ENCODE measurements at regions of chr7 and their contacts with region 1.

Region 1: DNA sequence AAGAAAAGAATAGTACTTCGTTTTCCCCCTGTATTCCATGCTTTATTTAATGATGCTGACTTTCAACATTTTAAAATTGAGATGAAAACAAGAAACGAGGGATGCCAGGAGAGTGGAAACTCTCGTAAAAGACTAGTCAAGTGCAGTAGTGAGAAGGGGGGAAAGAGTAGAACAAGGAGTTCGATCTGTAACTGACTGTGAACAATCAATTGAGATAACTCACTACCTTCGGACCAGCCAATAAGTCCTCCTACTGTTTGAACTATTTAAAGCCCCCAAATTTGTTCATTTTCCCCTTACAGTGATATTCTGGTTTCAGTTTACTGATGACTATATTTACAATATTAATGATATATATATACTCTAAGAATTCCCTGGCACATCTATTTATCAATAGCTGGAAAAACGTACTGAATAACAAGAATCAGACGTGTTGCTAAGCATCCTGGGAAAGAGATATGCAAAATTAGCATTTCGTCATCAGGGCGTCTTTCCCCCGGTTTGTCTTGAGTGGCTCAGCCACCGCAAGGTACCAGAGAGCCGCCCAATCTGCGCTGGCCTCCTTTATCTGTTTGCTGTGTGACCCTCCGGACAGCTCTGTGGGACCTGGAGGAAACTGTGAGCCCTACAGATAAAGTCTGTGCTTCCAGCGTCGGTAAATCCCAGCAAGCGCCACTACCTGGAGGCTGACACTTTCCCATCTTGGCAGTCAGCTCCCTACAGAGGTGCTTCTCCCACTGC is 41.1 kb downstream of the PDIA4 start:
- DNase-seq: peak; percentile 86 to 93 (median 90)
- H3K4me3 ChIP-seq: peak overlapping the region; percentile 66 to 99 (median 81)
- H3K4me3 Mint-ChIP-seq: peak overlapping the region; percentile 98
- H3K27ac ChIP-seq: peak overlapping the region; percentile 62 to 78
- H3K27ac Mint-ChIP-seq: peak overlapping the region; percentile 85 to 95 (median 91)
- H3K4me1 ChIP-seq: peaks cover 40 to 48% of the 10 kb centered on the region in 2 donors
- H3K4me1 Mint-ChIP-seq: peaks cover 45% of the 10 kb centered on the region
- H3K27me3 ChIP-seq: peaks cover 0 to 3% of the 10 kb centered on the region in 2 donors
- H3K27me3 Mint-ChIP-seq: peaks cover under 1 to 9% (median 2%) of the 10 kb centered on the region in 3 donors
- CTCF ChIP-seq: no peak

Region 2: DNA sequence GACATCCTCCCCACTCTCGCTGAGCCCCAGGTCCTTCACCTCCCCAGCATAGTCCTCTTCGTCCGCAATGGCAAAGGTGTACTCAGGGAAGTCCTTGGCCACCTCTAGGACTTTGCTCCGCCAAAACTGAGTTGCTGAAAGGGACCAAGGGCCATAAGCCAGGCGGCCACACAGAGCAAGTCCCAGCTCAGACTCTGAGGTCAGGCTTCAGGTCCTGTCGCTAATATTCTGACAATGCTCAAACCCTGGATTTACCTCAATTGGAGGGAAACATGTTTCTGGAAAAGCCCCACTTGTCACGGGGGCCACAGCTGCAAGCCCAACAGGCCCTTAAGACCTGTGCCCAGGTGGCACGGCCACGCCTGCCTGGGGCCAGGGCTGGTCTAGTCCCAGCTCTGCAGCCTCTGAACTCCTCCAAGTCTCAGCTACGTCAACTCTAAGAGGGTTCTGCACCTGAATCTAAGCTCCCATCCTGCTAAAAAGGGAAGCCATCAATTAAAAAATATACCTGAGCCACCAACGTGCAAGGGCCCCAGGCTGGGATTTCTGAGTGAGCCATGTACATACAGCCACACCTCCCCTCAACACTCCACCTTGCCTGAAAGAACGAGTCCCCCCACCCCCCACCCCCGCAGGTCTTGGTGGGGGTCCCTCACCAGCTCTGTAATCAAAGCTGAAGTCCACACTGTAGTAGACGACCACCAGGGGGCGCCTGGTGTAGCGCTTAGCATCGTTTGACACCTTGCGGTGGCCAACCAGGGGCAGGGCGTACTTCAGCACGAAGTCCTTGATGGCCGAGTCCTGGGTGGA is 18.3 kb after region 1 on chr7:
- intact Hi-C with region 1: no loop called
- DNase-seq: peak; percentile 67 to 85 (median 80)
- H3K4me3 ChIP-seq: no peak overlapping the region
- H3K4me3 Mint-ChIP-seq: no peak overlapping the region
- H3K27ac ChIP-seq: peak overlapping the region in 1 of 2 donors; percentile 6
- H3K27ac Mint-ChIP-seq: peak overlapping the region in 4 of 7 donors; percentile 15 to 68 (median 42)
- H3K4me1 ChIP-seq: no peaks in the 10 kb centered on the region
- H3K4me1 Mint-ChIP-seq: peaks cover 2% of the 10 kb centered on the region
- H3K27me3 ChIP-seq: no peaks in the 10 kb centered on the region
- H3K27me3 Mint-ChIP-seq: peaks cover 0 to 3% (median 0%) of the 10 kb centered on the region in 3 donors
- CTCF ChIP-seq: peak; percentile 94

Region 3: DNA sequence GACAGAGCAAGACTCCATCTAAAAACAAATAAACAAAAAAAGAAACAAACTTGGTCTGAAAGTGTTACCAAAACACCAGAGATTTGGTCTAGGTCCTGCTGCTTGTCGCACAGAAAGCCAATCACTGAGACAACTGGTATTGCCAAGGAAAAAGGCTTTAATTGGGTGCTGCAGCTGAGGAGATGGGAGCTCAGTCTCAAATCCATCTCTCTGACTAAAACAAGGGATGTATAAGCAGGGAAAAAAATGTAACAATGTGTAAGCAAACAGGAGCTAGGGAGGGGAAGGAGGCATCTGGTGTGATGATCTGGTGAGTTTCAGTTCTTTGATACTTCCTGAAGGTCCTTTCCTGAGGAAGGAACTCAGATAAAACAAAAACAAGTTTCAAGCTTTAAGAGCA is 49.5 kb after region 1 on chr7:
- intact Hi-C with region 1: no loop called
- DNase-seq: no peak
- H3K4me3 ChIP-seq: no peak overlapping the region
- H3K4me3 Mint-ChIP-seq: no peak overlapping the region
- H3K27ac ChIP-seq: no peak overlapping the region
- H3K27ac Mint-ChIP-seq: no peak overlapping the region
- H3K4me1 ChIP-seq: no peaks in the 10 kb centered on the region
- H3K4me1 Mint-ChIP-seq: no peaks in the 10 kb centered on the region
- H3K27me3 ChIP-seq: no peaks in the 10 kb centered on the region
- H3K27me3 Mint-ChIP-seq: peaks cover 0 to 3% (median 0%) of the 10 kb centered on the region in 3 donors
- CTCF ChIP-seq: no peak

Region 4: GRCh38 chr7:149067876-149068275 is 80.7 kb after region 1 on chr7:
- intact Hi-C with region 1: loop called in 1 of 2 experiments (anchors 2 kb)
- DNase-seq: no peak
- H3K4me3 ChIP-seq: no peak overlapping the region
- H3K4me3 Mint-ChIP-seq: no peak overlapping the region
- H3K27ac ChIP-seq: no peak overlapping the region
- H3K27ac Mint-ChIP-seq: peak overlapping the region in 1 of 7 donors; percentile 16
- H3K4me1 ChIP-seq: peaks cover 0 to 4% of the 10 kb centered on the region in 2 donors
- H3K4me1 Mint-ChIP-seq: peaks cover 8% of the 10 kb centered on the region
- H3K27me3 ChIP-seq: no peaks in the 10 kb centered on the region
- H3K27me3 Mint-ChIP-seq: peaks cover 0 to 2% (median 0%) of the 10 kb centered on the region in 3 donors
- CTCF ChIP-seq: no peak

Region 5: DNA sequence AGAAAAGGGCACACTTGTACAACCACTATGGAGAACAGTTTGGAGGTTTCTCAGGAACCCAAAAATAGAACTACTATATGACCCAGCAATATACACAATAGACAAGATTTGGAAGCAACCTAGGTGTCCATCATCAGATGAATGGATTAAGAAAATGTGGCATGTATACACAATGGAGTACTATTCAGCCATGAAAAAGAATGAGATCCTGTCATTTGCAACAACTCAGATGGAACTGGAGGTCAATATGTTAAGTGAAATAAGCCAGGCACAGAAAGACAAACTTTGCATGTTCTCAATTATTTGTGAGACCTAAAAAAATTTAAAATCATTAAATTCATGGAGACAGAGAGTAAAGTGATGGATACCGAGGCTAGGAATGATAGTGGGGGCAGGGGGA is 667.4 kb after region 1 on chr7:
- intact Hi-C with region 1: no loop called
- DNase-seq: no peak
- H3K4me3 ChIP-seq: no peak overlapping the region
- H3K4me3 Mint-ChIP-seq: no peak overlapping the region
- H3K27ac ChIP-seq: no peak overlapping the region
- H3K27ac Mint-ChIP-seq: no peak overlapping the region
- H3K4me1 ChIP-seq: no peaks in the 10 kb centered on the region
- H3K4me1 Mint-ChIP-seq: no peaks in the 10 kb centered on the region
- H3K27me3 ChIP-seq: peaks cover 0 to 4% of the 10 kb centered on the region in 2 donors
- H3K27me3 Mint-ChIP-seq: peaks cover 10 to 27% (median 10%) of the 10 kb centered on the region in 3 donors
- CTCF ChIP-seq: no peak

Measured in CD14-positive monocyte (primary cell).